AG04449 (cell line): ENCODE measurements at regions of chr6 and their contacts with region 1.

Region 1: GRCh38 chr6:57021086-57021720 is 25.3 kb upstream of the KIAA1586 start:
- DNase-seq: peak; percentile 3
- H3K4me3 ChIP-seq: no peak overlapping the region
- CTCF ChIP-seq: peak; percentile 19

Region 2: DNA sequence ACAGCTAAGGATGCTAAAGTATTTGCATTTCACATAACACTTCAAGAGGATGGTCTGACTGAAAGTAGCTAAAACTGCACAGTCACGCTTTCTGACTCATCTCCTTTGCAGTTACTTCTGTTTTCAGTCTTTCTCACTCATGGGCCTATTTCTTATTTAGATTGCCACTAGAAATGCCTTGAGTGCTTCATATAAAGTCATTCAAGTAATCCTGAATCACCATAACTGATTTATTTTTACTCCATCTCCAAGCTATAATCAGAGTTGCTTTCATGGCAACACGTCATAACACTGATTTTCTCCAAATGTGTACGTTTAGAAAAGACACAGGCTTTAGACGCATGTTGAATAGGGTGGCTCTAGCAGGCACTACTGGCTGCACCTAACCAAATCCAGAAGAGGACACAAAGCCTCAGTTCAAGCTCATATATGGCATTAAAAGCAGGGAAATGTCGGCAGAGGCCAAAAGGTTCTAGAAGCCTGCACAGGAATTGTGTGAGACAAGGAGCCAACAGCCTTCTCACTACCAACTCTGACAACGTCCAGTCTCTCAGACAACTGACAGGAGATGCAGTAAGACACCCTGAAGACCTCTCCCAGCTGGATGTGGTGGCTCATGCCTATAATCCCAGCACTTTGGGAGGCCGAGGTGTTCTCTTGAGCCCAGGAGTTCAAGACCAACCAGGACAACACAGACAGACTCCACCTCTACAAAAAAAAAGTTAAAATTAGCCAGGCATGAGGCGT is 130.3 kb before region 1 on chr6:
- CTCF ChIA-PET with region 1: interaction called, 13 read pairs
- POLR2A ChIA-PET with region 1: no interaction called
- DNase-seq: peak; percentile 84
- H3K4me3 ChIP-seq: no peak overlapping the region
- CTCF ChIP-seq: no peak

Region 3: DNA sequence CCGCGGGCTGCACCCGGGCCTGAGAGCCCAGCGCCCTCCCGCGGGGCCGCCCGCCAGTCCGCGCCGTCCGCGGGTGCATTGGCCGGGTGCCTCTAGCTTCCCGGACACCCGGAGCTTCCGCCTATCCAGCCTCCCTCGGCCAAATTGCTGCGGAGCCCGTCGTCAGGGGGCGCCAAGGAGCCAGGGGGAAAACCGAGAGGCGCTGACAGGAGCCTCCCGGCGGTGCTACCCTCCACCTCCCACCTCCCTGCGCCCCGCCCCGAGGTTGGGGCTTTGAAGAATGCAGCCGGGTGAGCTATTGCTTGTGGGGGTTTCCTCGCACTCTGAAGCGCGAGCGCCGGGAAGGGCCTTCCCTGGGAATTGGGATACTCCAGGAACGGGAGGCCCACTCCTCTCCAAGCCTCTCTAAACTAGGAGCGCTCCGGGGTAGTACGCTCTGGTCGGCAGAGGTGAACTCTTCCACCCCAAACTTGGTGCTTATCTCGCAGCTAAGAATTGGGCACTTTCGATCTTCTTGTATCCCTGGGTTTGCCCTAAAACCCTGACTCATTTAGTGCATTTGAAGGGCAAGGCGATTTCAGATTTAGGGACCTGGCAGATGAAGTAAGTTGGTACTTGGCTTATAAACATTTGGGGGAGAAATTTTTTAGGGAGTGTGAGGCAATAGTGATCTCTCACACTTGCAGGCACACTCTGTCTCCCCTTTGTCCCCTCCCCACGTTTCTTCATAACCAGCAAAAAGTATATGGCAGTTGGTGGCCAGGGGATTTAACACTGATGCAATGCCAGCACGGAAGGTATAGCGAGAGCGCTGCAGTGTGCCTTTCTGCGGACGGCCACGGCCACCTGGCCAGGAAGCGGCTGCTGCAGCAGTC is 65.8 kb before region 1 on chr6:
- CTCF ChIA-PET with region 1: interaction called, 12 read pairs
- POLR2A ChIA-PET with region 1: no interaction called
- DNase-seq: no peak
- H3K4me3 ChIP-seq: peak overlapping the region; percentile 88
- CTCF ChIP-seq: peak; percentile 95

Region 4: GRCh38 chr6:56992036-56992435 is 29.2 kb before region 1 on chr6:
- CTCF ChIA-PET with region 1: interaction called, 18 read pairs
- POLR2A ChIA-PET with region 1: no interaction called
- DNase-seq: no peak
- H3K4me3 ChIP-seq: no peak overlapping the region
- CTCF ChIP-seq: no peak

Region 5: GRCh38 chr6:57004292-57004691 is 16.9 kb before region 1 on chr6:
- CTCF ChIA-PET with region 1: interaction called, 34 read pairs
- POLR2A ChIA-PET with region 1: no interaction called
- DNase-seq: no peak
- H3K4me3 ChIP-seq: no peak overlapping the region
- CTCF ChIP-seq: no peak

Region 6: GRCh38 chr6:57035549-57035948 is 14.3 kb after region 1 on chr6:
- CTCF ChIA-PET with region 1: interaction called, 43 read pairs
- POLR2A ChIA-PET with region 1: no interaction called
- DNase-seq: no peak
- H3K4me3 ChIP-seq: no peak overlapping the region
- CTCF ChIP-seq: no peak